Cardiac septum (tissue), 1 donor: ENCODE measurements at regions of chr9 and their contacts with region 1.

Region 1: GRCh38 chr9:93453047-93453914 is at the start of gene FAM120AOS:
- DNase-seq: peak; percentile 97
- total RNA-seq, gene FAM120AOS: 39.1 TPM

Region 2: DNA sequence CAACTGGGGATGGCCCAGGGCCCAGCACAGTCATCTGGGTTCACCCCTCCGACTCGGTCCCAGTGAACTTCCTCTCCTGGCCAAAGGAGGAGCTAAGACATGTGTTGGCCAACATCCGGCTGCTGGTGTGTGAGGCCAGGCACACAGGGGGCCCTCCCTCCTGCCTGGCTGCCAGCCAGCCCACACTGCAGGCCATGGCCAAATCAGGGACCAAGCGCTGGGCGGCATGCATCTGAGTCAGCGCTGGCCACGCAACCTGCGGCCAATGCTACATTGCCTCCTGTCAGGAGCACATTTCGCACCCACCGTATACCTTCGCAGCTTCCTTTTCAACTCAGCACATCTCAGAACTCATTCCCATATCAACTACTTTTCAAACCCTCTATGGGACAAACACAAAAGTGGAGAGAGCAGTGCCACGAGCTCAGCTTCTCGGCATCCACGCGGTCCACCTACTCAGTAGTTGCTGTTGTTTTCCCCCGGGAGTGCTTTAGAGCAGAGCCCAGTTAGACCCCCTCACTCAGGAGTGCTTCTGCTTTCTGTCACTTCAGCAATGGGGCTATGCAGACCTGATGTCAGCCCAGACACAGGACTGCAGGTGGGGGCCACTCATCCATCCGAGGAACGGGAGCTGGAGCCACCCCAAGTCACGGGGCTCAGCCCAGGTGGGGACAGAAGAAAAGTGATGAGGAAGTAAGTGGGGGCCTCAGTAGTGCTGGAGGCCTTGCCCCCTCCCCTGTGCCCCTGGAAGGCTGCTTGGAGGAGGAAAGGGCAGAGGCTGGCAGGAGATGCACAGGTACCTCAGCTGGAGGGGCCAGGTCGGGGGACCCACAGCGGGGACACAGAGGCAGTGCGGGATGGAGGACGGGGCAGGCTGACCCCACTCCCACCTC is 333.1 kb before region 1 on chr9:
- intact Hi-C with region 1: loop called (anchors 10 kb)
- DNase-seq: peak; percentile 98

Region 3: GRCh38 chr9:93501406-93501805 is 48.1 kb after region 1 on chr9:
- intact Hi-C with region 1: loop called (anchors 5 kb)
- DNase-seq: no peak

Region 4: DNA sequence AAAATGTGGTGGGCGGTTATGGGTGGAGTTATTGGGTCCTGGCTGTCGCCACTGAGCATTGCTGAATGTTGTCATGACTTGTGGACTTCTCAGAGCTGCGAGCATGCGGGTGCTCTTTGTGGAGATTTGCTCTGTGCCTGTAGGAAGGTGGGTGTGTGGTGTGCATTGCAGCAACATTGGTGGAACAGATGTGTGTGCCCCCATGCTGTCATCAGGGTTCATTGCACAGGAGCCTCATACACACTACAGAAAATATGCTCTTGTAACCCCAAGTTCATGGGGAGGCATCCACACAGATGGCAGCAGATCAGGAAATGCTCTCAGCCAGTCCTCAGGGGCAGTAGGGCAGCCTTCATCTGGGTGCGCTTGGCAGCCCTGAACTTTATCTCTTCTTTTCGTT is 67.2 kb after region 1 on chr9:
- intact Hi-C with region 1: loop called (anchors 5 kb)
- DNase-seq: no peak

Region 5: DNA sequence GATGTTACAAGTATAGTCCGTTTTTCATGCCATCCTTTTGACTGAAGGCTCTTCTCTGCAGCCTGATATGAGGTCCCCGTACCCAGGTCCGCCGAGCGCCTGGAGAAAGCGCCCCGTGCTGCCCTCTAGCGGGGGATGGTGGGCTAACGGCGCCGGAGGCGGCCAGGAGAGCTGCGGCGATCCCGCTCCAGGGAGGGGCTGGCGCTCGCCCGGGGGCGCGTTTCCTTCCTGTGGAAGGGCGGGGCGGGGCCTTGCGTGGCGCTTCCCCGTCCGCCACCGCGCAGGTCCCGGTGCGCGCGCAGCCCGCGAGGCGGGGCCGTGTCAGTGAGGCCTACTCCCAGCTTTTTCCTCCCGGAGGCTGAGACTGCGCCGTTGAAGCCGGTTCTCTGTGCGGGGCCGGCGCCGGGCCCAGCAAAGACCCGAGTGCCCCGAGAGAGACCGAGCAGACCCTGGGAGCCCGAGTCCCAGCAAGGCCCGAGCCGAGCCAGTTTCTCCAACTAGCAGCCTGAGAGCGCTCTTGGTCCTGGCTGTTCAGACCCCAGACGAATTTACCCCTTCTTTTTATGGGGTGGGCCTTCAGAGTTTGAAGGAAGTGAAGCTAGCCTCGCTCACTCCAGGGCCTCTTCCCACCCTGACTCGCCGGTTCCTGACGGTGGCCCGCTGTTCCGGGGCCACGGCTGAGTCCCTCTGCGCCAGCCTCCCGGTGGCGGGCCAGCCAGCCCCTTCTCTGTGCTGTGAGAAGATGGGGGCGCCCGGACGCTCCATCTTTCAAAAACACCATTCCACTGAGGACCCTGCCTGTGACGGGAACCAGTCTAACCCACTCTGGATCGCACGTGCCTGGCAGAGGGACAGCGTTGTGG is 113.4 kb after region 1 on chr9:
- intact Hi-C with region 1: loop called (anchors 1 kb)
- DNase-seq: peak; percentile 99

Region 6: GRCh38 chr9:93642961-93643360 is 189.7 kb after region 1 on chr9:
- intact Hi-C with region 1: no loop called
- DNase-seq: peak; percentile 43